Endothelial cell of umbilical vein (primary cell): ENCODE measurements at regions of chr19 and their contacts with region 1.

Region 1: GRCh38 chr19:4267101-4267900 is 11.8 kb upstream of the SHD start:
- DNase-seq: peak; percentile 26
- H3K4me3 ChIP-seq: no peak overlapping the region
- H3K27ac ChIP-seq: no peak overlapping the region
- H3K4me1 ChIP-seq: no peaks in the 10 kb centered on the region
- H3K27me3 ChIP-seq: no peaks in the 10 kb centered on the region
- CTCF ChIP-seq: peak; percentile 66 to 88
- POLR2A ChIP-seq: no peak

Region 2: GRCh38 chr19:4172861-4173473 is 94.3 kb before region 1 on chr19:
- CTCF ChIA-PET with region 1: no interaction called
- POLR2A ChIA-PET with region 1: no interaction called
- dilution Hi-C with region 1: no loop called
- intact Hi-C with region 1: no loop called
- DNase-seq: no peak
- H3K4me3 ChIP-seq: no peak overlapping the region
- H3K27ac ChIP-seq: no peak overlapping the region
- H3K4me1 ChIP-seq: no peaks in the 10 kb centered on the region
- H3K27me3 ChIP-seq: peaks cover 0 to 2% of the 10 kb centered on the region in 2 experiments
- CTCF ChIP-seq: no peak
- POLR2A ChIP-seq: no peak

Region 3: GRCh38 chr19:4256563-4256962 is 10.7 kb before region 1 on chr19:
- CTCF ChIA-PET with region 1: interaction called, 19 read pairs
- POLR2A ChIA-PET with region 1: no interaction called
- dilution Hi-C with region 1: no loop called
- intact Hi-C with region 1: no loop called
- DNase-seq: no peak
- H3K4me3 ChIP-seq: no peak overlapping the region
- H3K27ac ChIP-seq: no peak overlapping the region
- H3K4me1 ChIP-seq: no peaks in the 10 kb centered on the region
- H3K27me3 ChIP-seq: no peaks in the 10 kb centered on the region
- CTCF ChIP-seq: peak in 1 of 2 donors; percentile 12
- POLR2A ChIP-seq: no peak

Region 4: DNA sequence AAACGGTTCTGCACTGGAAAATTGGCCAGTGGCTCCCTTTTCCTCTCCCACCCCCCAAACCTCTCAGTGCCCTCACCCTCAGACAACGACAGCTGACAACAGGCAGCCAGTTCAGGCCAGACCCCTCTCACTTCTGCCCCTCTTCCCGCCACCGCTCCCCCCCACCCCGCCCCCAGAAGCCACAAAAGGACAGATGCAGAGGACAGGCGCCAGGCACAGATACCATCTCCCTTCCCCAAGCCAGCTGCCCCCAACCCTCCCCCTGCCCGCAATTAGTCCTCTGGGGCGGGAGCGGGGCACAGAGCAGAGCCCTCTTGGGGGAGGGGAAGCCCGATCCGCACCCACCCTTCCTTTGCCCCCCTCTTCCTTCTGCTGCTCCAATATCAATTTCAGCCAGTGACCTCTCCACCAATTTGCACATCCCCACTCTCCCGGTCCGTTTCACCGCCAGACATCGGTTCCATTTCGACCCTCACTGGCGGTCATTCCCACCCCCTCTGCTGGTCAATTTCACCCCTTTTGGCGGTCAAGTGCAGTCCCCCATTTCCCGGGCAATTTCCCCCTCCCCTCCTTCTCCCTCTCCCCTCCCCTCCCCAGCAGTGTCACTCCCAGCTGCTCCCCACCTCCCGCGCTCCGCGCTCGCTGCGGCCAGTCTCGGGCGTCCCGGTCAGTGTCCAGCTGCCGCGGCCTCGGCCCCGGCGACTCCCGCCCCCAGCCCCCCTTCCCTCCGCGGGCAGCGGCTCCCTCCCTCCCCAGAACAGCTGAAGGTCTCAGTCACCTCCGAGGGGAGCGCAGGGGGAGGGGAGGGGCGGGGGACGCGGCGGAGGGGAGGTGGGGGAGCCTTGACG is 11.3 kb after region 1 on chr19 and contains the start of gene SHD:
- CTCF ChIA-PET with region 1: interaction called, 24 read pairs
- POLR2A ChIA-PET with region 1: no interaction called
- dilution Hi-C with region 1: no loop called
- intact Hi-C with region 1: no loop called
- DNase-seq: no peak
- H3K4me3 ChIP-seq: no peak within 1 kb of the TSS
- H3K27ac ChIP-seq: no peak within 1 kb of the TSS
- H3K4me1 ChIP-seq: no peaks in the 10 kb centered on the region
- H3K27me3 ChIP-seq: peaks cover 19 to 30% of the 10 kb centered on the region in 2 experiments
- CTCF ChIP-seq: no peak
- POLR2A ChIP-seq: no peak
- total RNA-seq, gene SHD: not detected in 2 replicates

Region 5: GRCh38 chr19:4342615-4343369 is 75.5 kb after region 1 on chr19:
- CTCF ChIA-PET with region 1: interaction called, 22 read pairs
- POLR2A ChIA-PET with region 1: no interaction called
- dilution Hi-C with region 1: no loop called
- intact Hi-C with region 1: no loop called
- DNase-seq: peak; percentile 100
- H3K4me3 ChIP-seq: peak overlapping the region; percentile 55 to 85 (median 84)
- H3K27ac ChIP-seq: peak overlapping the region; percentile 77
- H3K4me1 ChIP-seq: peaks cover 16% of the 10 kb centered on the region
- H3K27me3 ChIP-seq: no peaks in the 10 kb centered on the region
- CTCF ChIP-seq: peak in 1 of 2 donors; percentile 47
- POLR2A ChIP-seq: peak; percentile 96

Region 6: GRCh38 chr19:4352701-4353121 is 85.4 kb after region 1 on chr19:
- CTCF ChIA-PET with region 1: interaction called, 120 read pairs
- POLR2A ChIA-PET with region 1: no interaction called
- dilution Hi-C with region 1: no loop called
- intact Hi-C with region 1: loop called (anchors 1 kb)
- DNase-seq: peak; percentile 66
- H3K4me3 ChIP-seq: no peak overlapping the region
- H3K27ac ChIP-seq: no peak overlapping the region
- H3K4me1 ChIP-seq: no peaks in the 10 kb centered on the region
- H3K27me3 ChIP-seq: no peaks in the 10 kb centered on the region
- CTCF ChIP-seq: peak; percentile 76 to 85
- POLR2A ChIP-seq: no peak